Panc1 (cell line): ENCODE measurements at regions of chr1 and their contacts with region 1.

Region 1: DNA sequence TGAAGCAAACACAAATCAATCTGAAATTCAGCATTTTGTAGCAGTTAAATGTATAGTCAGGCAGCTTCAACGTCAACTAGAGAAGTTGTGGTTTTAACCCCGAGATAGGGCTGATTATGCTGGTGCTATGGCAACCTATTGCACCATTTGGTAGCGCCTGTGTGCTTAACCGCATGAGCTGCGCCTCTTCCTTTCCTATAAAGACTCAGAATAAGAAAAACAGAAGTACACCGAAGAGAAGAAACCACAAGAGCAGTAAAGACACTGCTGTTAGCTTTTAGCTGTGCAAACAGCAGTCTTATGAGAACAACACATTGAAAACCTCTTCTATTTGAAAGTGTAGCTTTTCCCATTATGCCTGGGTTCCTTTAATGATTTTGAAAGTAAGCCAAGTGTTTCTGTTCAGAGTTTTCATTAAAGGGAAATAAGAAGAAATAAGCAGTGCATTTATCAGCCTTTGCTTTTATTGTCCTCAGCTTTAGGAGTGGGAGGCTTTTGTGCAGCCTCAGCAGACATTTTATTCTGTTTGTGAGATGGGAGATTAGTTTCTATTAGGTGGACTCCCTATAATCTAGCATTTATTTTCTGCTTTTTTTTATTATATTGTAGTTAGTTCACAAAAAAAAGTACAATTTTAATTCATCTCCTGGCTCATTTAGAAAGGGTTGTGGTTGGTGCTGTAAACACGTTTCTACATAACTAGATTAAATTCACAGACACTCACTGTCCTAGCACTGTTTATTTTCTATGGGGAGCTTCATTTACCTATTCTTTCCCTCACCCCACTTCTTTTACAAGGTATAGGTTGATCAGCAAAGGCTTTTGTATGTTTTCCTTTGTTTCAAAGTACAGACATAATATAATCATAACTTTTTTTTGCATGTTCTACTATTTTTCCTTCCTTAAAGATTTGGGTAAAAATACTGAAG is 43.3 kb downstream of the PTPRC start:
- DNase-seq: no peak
- ATAC-seq: peak; percentile 96
- H3K4me3 ChIP-seq: peak overlapping the region; percentile 15 to 41
- H3K27ac ChIP-seq: peak overlapping the region; percentile 80
- H3K4me1 ChIP-seq: peaks cover 15% of the 10 kb centered on the region
- H3K27me3 ChIP-seq: no peaks in the 10 kb centered on the region
- CTCF ChIP-seq: no peak

Region 2: DNA sequence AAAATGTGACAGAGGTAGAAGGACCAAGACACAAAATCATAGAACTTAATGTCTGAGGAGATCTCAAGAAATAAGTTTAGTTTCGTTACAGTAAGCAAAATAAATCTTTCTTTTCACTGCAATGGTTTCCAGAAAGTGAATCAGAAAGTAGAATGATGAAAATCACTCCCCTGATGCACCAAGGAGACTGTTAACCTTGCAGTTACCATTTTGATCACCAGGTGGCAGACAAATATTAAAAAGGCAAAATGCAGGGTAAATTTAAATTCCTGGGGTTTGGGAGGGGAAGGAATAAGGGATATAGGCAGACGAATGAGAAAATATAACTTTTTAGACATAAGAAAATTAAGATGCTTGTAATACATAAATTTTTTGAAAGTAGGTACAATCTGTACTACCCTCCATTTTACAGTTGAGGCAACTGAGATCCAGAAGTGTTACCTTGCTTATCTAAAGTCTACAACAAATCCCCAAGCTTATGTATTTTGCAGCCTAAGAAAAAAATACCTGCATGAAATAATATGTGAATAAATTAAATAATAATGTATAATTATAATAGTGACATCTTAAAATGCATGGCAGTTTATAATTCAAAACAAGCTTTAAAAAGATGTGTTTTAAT is 1160.9 kb before region 1 on chr1:
- CTCF ChIA-PET with region 1: no interaction called
- POLR2A ChIA-PET with region 1: no interaction called
- in situ Hi-C with region 1: no loop called
- intact Hi-C with region 1: loop called (anchors 10 kb)
- DNase-seq: no peak
- ATAC-seq: no peak; the same call in 1 of the 2 replicates
- H3K4me3 ChIP-seq: no peak overlapping the region
- H3K27ac ChIP-seq: no peak overlapping the region
- H3K4me1 ChIP-seq: no peaks in the 10 kb centered on the region
- H3K27me3 ChIP-seq: no peaks in the 10 kb centered on the region
- CTCF ChIP-seq: peak; percentile 70; the same call in 1 of the 2 replicates

Region 3: GRCh38 chr1:197937892-197938291 is 744.2 kb before region 1 on chr1:
- CTCF ChIA-PET with region 1: no interaction called
- POLR2A ChIA-PET with region 1: no interaction called
- in situ Hi-C with region 1: no loop called
- intact Hi-C with region 1: loop called (anchors 10 kb)
- DNase-seq: no peak
- ATAC-seq: no peak
- H3K4me3 ChIP-seq: no peak overlapping the region
- H3K27ac ChIP-seq: no peak overlapping the region
- H3K4me1 ChIP-seq: no peaks in the 10 kb centered on the region
- H3K27me3 ChIP-seq: no peaks in the 10 kb centered on the region
- CTCF ChIP-seq: no peak

Region 4: GRCh38 chr1:198088360-198089071 is 593.6 kb before region 1 on chr1:
- CTCF ChIA-PET with region 1: no interaction called
- POLR2A ChIA-PET with region 1: no interaction called
- in situ Hi-C with region 1: no loop called
- intact Hi-C with region 1: loop called (anchors 10 kb)
- DNase-seq: peak; percentile 27
- ATAC-seq: peak; percentile 53
- H3K4me3 ChIP-seq: no peak overlapping the region
- H3K27ac ChIP-seq: no peak overlapping the region
- H3K4me1 ChIP-seq: no peaks in the 10 kb centered on the region
- H3K27me3 ChIP-seq: no peaks in the 10 kb centered on the region
- CTCF ChIP-seq: peak; percentile 76

Region 5: DNA sequence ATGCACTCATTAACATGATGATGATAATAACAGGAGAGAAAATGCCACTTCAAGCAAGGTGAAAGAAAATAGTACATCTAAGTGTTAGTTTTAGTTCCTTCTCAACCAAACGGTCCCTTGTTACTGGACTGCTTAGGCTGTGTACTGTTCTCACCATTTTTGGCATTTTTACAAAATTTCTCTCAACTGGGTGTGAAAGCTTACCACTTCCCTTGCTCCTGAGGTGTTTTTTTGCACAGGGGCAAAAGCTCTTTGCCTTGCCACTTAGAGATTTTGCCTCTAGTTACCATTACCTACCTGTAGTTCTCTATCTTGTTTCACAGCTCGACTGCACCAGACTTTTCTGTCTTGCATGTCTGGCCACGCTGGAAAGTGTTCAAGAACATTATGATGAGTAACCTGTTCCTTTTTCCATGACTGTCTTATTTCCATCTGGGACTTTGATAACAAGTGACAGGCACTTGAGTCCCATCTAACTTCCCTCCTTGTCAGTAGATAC is 514.6 kb before region 1 on chr1:
- CTCF ChIA-PET with region 1: no interaction called
- POLR2A ChIA-PET with region 1: no interaction called
- in situ Hi-C with region 1: no loop called
- intact Hi-C with region 1: loop called (anchors 10 kb)
- DNase-seq: no peak
- ATAC-seq: no peak
- H3K4me3 ChIP-seq: no peak overlapping the region
- H3K27ac ChIP-seq: no peak overlapping the region
- H3K4me1 ChIP-seq: peaks cover 2% of the 10 kb centered on the region; the same call in 1 of the 2 replicates
- H3K27me3 ChIP-seq: no peaks in the 10 kb centered on the region
- CTCF ChIP-seq: no peak

Region 6: GRCh38 chr1:198520524-198521254 is 161.4 kb before region 1 on chr1:
- CTCF ChIA-PET with region 1: no interaction called
- POLR2A ChIA-PET with region 1: no interaction called
- in situ Hi-C with region 1: no loop called
- intact Hi-C with region 1: no loop called
- DNase-seq: no peak
- ATAC-seq: no peak
- H3K4me3 ChIP-seq: no peak overlapping the region
- H3K27ac ChIP-seq: no peak overlapping the region
- H3K4me1 ChIP-seq: no peaks in the 10 kb centered on the region
- H3K27me3 ChIP-seq: no peaks in the 10 kb centered on the region
- CTCF ChIP-seq: no peak